ENCODE measurements at regions of chr12 and their contacts with region 1.

Region 1: DNA sequence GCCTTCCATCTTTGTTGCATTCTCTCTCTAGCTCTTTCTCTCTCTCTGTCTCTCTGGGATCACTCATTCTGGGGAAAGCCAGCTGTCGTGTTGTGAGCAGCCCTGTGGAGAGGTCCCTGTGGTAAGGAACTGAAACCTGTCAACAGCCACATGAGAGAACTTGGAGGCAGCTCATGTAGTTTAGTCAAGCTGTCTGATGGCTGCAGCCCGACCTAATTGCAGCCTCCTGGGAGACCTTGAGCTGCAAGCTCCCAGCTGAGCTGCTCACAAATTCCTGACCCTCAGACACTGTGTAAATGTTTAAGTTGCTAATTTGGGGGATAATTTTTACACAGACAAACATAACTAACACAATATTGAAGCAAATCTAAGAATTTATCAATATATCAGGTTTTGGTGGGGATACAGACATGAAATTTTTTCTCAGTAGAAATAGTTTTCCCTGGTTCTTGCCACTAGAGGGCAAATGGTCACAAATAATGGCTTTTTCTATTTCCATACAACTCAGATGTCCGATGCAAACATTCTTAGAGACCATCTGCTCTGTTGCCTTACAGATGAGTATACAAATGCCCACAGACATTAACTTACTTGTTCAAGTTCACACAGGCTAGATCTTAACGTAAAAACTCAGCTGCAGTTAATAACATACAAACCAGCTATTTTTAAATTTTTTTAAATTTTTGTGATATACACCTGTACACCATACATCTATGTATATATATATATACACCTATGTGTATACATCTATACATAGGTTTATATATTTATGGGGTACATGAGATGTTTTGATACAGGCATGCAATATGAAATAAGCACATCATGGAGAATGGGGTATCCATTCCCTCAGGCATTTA is 15.5 kb upstream of the KRR1 start:
- DNase-seq: peak in 6 of 9 donors; percentile 10 to 26 (median 18)
- ATAC-seq: peak; percentile 53
- H3K4me3 ChIP-seq: no peak overlapping the region
- H3K4me3 Mint-ChIP-seq: no peak overlapping the region
- H3K27ac ChIP-seq: no peak overlapping the region
- H3K27ac Mint-ChIP-seq: peak overlapping the region in 1 of 9 donors; percentile 21
- H3K4me1 ChIP-seq: no peaks in the 10 kb centered on the region
- H3K4me1 Mint-ChIP-seq: peaks cover 0 to 7% (median 2%) of the 10 kb centered on the region in 7 donors
- H3K27me3 ChIP-seq: no peaks in the 10 kb centered on the region
- H3K27me3 Mint-ChIP-seq: peaks cover 32 to 40% (median 38%) of the 10 kb centered on the region in 5 donors

Region 2: DNA sequence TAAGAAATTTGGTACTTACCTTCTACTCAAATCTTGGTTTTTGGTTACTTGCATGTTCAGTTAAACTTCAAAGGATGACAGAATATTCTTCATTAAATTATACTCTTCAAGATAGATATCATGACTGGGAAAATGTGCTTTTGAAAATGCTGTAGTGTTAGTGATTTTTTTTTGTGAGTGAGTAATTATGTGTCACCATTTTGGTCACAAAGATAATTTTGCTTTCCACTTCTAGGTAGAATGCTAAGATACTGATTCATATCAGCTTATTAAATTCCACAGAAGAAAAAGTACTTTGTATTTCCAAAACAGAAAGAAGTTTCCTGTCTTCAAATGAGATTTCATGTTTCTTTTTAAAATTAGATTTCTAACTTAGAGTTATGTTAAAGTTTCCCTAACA is 928.1 kb before region 1 on chr12:
- CTCF ChIA-PET with region 1: no interaction called
- POLR2A ChIA-PET with region 1: no interaction called
- intact Hi-C with region 1: no loop called
- DNase-seq: no peak
- ATAC-seq: no peak
- H3K4me3 ChIP-seq: no peak overlapping the region
- H3K4me3 Mint-ChIP-seq: no peak overlapping the region
- H3K27ac ChIP-seq: no peak overlapping the region
- H3K27ac Mint-ChIP-seq: no peak overlapping the region
- H3K4me1 ChIP-seq: no peaks in the 10 kb centered on the region
- H3K4me1 Mint-ChIP-seq: no peaks in the 10 kb centered on the region
- H3K27me3 ChIP-seq: no peaks in the 10 kb centered on the region
- H3K27me3 Mint-ChIP-seq: peaks cover 0 to 12% (median 5%) of the 10 kb centered on the region in 5 donors

Region 3: GRCh38 chr12:75814851-75815754 is 288.2 kb after region 1 on chr12:
- CTCF ChIA-PET with region 1: no interaction called
- POLR2A ChIA-PET with region 1: no interaction called
- intact Hi-C with region 1: loop called in 1 of 2 experiments (anchors 10 kb)
- DNase-seq: peak in 1 of 9 donors; percentile 5
- ATAC-seq: peak; percentile 34
- H3K4me3 ChIP-seq: no peak overlapping the region
- H3K4me3 Mint-ChIP-seq: no peak overlapping the region
- H3K27ac ChIP-seq: no peak overlapping the region
- H3K27ac Mint-ChIP-seq: no peak overlapping the region
- H3K4me1 ChIP-seq: peaks cover 0 to 7% of the 10 kb centered on the region in 2 donors
- H3K4me1 Mint-ChIP-seq: peaks cover 0 to 18% (median 0%) of the 10 kb centered on the region in 7 donors
- H3K27me3 ChIP-seq: no peaks in the 10 kb centered on the region
- H3K27me3 Mint-ChIP-seq: peaks cover 0 to 7% (median 5%) of the 10 kb centered on the region in 5 donors

Region 4: DNA sequence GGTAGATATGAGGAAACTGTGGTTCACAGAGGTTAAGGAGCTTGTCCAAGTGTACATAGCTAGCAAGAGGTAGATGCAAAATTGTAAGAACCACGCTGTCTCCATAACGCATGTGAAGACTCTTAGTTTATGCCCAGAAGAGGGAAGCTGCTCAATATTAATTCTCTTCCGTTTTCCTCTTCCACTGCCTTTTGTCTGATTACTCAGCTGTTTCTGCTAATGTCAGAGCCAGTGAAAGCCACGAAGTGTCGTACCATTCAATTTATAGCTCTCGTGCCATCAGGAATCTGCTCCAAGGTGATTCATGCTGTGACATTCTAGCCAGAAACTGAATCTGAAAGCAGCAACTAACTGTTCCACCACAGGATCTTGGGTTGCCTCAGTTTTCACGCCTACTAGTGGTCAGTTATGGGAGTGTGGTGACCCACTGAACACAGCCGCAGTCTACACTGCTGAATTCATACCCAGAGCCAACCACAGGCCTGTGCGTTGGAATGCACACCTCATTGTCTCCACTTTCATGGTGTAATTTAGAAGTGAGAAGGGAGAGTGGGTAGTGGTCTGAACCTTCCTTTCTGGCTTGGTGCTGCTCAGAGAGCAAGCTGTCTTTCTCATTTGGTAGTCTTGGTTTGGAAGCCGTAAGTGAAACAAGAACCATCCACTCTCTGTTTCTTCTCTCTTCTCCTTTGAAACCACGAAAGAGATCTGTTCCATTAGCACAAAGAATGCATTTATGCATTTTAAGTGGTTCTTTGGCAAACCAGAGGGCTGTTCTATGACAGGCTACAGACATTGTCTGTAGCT is 631.8 kb after region 1 on chr12:
- CTCF ChIA-PET with region 1: no interaction called
- POLR2A ChIA-PET with region 1: no interaction called
- intact Hi-C with region 1: loop called in 1 of 2 experiments (anchors 10 kb)
- DNase-seq: peak; percentile 9 to 88 (median 37)
- ATAC-seq: peak; percentile 95
- H3K4me3 ChIP-seq: no peak overlapping the region
- H3K4me3 Mint-ChIP-seq: peak overlapping the region; percentile 0 to 88 (median 69)
- H3K27ac ChIP-seq: no peak overlapping the region
- H3K27ac Mint-ChIP-seq: peak overlapping the region in 4 of 9 donors; percentile 54 to 80 (median 68)
- H3K4me1 ChIP-seq: no peaks in the 10 kb centered on the region
- H3K4me1 Mint-ChIP-seq: peaks cover 0 to 18% (median 10%) of the 10 kb centered on the region in 7 donors
- H3K27me3 ChIP-seq: no peaks in the 10 kb centered on the region
- H3K27me3 Mint-ChIP-seq: peaks cover 0 to 3% (median 0%) of the 10 kb centered on the region in 5 donors

Measured in naive thymus-derived CD4-positive, alpha-beta T cell (primary cell).